AG04449 (cell line): ENCODE measurements at regions of chr11 and their contacts with region 1.

Region 1: GRCh38 chr11:130827451-130828377 is 88.6 kb downstream of the SNX19 start:
- DNase-seq: no peak
- H3K4me3 ChIP-seq: no peak overlapping the region
- CTCF ChIP-seq: peak; percentile 81

Region 2: GRCh38 chr11:130442737-130443136 is 385.0 kb before region 1 on chr11:
- CTCF ChIA-PET with region 1: interaction called, 201 read pairs
- POLR2A ChIA-PET with region 1: no interaction called
- DNase-seq: no peak
- H3K4me3 ChIP-seq: no peak overlapping the region
- CTCF ChIP-seq: no peak

Region 3: DNA sequence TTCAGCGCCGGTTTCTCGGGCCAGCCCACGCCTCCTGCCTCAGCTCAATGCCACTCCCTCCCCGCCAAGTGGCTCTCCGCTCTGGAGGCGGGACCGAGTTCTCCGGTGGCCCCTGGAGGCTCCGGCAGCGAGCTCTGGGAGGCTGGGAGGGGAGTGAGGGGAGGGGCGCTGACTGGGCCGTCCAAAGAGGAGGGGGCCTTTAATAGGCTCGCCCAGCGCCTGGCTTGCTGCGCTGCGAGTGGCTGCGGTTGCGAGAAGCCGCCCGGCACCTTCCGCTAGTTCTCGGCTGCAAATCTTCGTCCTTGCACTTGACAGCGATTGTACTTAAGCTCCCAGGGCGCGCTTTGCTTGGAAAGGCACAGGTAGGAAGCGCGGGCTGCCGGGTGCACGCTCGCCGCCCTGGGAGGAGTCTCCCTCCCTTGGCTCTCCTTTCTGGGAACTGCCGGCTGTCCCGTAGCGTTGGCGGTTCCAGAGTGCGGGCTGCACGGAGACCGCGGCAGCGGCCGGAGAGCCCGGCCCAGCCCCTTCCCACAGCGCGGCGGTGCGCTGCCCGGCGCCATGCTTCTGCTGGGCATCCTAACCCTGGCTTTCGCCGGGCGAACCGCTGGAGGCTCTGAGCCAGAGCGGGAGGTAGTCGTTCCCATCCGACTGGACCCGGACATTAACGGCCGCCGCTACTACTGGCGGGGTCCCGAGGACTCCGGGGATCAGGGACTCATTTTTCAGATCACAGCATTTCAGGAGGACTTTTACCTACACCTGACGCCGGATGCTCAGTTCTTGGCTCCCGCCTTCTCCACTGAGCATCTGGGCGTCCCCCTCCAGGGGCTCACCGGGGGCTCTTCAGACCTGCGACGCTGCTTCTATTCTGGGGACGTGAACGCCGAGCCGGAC is 379.1 kb before region 1 on chr11 and contains the start of gene ADAMTS15:
- CTCF ChIA-PET with region 1: interaction called, 14 read pairs
- POLR2A ChIA-PET with region 1: no interaction called
- DNase-seq: no peak
- H3K4me3 ChIP-seq: peak within 1 kb of the TSS; percentile 66
- CTCF ChIP-seq: no peak

Region 4: GRCh38 chr11:130839981-130840666 is 12.4 kb after region 1 on chr11:
- CTCF ChIA-PET with region 1: interaction called, 23 read pairs
- POLR2A ChIA-PET with region 1: no interaction called
- DNase-seq: no peak
- H3K4me3 ChIP-seq: no peak overlapping the region
- CTCF ChIP-seq: no peak

Region 5: GRCh38 chr11:130937051-130937450 is 109.3 kb after region 1 on chr11:
- CTCF ChIA-PET with region 1: no interaction called
- POLR2A ChIA-PET with region 1: no interaction called
- DNase-seq: no peak
- H3K4me3 ChIP-seq: no peak overlapping the region
- CTCF ChIP-seq: no peak